ENCODE measurements at regions of chr22 and their contacts with region 1.

Region 1: GRCh38 chr22:40024201-40025061 is 29.7 kb downstream of the FAM83F start:
- DNase-seq: peak; percentile 20 to 78 (median 64)
- ATAC-seq: peak; percentile 72
- H3K4me3 ChIP-seq: no peak overlapping the region
- H3K4me3 Mint-ChIP-seq: no peak overlapping the region
- H3K27ac ChIP-seq: no peak overlapping the region
- H3K27ac Mint-ChIP-seq: no peak overlapping the region
- H3K4me1 ChIP-seq: peaks cover 6% of the 10 kb centered on the region
- H3K4me1 Mint-ChIP-seq: peaks cover 5% of the 10 kb centered on the region
- H3K27me3 ChIP-seq: no peaks in the 10 kb centered on the region
- H3K27me3 Mint-ChIP-seq: no peaks in the 10 kb centered on the region
- CTCF ChIP-seq: peak; percentile 80

Region 2: DNA sequence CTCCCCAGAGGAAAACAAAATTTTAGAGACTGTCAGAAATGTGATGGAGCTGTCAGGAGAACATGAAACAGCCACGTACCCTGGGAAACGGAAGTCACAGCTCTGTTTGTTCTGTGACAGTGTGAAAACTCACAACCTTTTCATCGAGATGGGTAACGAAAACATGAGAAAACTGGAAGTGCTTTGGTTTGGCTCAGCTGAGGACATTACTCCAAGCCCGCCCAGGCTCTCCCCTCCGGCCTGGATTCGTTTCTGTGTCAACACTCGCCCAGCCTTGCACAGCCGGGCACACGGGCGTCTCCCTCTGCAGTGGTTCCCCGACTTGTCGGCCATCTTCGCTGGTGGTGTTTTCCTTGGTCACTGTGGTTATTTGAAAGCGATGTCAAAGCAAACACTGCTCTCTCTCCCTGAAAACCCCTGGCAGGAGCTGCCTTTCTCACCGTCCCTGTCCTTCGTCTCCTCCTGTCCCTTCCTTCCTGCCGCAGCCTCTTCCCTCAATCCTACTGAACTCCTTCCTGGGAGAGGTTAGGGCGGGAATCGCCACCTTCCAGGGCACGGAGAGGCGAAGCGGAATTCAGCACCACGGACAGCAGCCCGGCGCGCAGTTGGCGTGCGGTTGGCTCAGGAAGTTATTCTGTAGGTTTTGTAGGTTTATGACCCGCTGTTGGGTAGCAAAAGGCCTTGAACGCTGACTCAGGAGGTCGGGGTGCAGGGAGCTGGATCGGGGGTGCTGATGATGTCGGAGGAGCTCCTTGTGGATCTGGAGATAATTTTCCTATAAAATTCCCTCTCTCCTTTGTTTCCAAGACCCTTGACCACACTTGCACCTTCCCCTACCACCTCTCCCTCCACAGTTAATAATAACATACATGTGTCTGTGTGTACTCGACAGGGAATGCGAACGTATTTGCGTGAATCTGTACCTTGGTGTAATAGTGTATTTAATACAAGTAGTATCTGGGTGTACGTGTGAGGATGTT is 478.8 kb before region 1 on chr22:
- CTCF ChIA-PET with region 1: interaction called, 12 read pairs
- POLR2A ChIA-PET with region 1: no interaction called
- intact Hi-C with region 1: no loop called
- DNase-seq: peak; percentile 48 to 83 (median 75)
- ATAC-seq: peak; percentile 79
- H3K4me3 ChIP-seq: peak overlapping the region in 1 of 2 experiments; percentile 22
- H3K4me3 Mint-ChIP-seq: no peak overlapping the region
- H3K27ac ChIP-seq: peak overlapping the region in 1 of 2 experiments; percentile 45
- H3K27ac Mint-ChIP-seq: no peak overlapping the region
- H3K4me1 ChIP-seq: peaks cover 13% of the 10 kb centered on the region
- H3K4me1 Mint-ChIP-seq: peaks cover 14% of the 10 kb centered on the region
- H3K27me3 ChIP-seq: peaks cover 3% of the 10 kb centered on the region in 2 experiments
- H3K27me3 Mint-ChIP-seq: peaks cover 37% of the 10 kb centered on the region
- CTCF ChIP-seq: no peak

Region 3: DNA sequence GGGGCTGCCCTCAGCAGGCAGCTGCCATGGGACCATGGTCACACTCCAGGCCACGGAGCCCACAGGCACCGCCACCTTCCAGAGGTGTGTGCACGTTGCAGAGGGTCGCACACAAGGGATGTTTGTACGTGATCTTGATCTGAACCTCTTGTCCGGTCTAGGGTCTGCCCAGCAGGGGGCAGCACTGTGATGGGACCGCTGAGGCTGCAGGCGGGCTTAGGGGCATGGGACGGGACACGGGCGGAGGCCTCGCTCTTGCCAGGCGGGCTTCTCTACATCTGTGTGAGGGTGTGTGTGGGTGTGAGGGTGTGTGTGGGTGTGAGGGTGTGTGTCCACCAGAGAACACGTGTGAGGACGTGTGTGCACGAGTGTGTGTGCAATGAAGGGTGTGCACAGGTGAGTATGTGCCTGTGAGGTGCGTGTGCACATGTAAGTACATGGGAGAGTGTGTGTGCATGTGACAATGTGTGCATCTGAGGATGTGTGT is 401.5 kb before region 1 on chr22:
- CTCF ChIA-PET with region 1: interaction called, 21 read pairs
- POLR2A ChIA-PET with region 1: no interaction called
- intact Hi-C with region 1: loop called in 1 of 2 experiments (anchors 5 kb)
- DNase-seq: peak; percentile 39 to 84 (median 67)
- ATAC-seq: peak; percentile 72
- H3K4me3 ChIP-seq: no peak overlapping the region
- H3K4me3 Mint-ChIP-seq: no peak overlapping the region
- H3K27ac ChIP-seq: no peak overlapping the region
- H3K27ac Mint-ChIP-seq: no peak overlapping the region
- H3K4me1 ChIP-seq: peaks cover 1% of the 10 kb centered on the region
- H3K4me1 Mint-ChIP-seq: peaks cover 4% of the 10 kb centered on the region
- H3K27me3 ChIP-seq: peaks cover 0 to 12% of the 10 kb centered on the region in 2 experiments
- H3K27me3 Mint-ChIP-seq: peaks cover 20% of the 10 kb centered on the region
- CTCF ChIP-seq: peak; percentile 43

Region 4: DNA sequence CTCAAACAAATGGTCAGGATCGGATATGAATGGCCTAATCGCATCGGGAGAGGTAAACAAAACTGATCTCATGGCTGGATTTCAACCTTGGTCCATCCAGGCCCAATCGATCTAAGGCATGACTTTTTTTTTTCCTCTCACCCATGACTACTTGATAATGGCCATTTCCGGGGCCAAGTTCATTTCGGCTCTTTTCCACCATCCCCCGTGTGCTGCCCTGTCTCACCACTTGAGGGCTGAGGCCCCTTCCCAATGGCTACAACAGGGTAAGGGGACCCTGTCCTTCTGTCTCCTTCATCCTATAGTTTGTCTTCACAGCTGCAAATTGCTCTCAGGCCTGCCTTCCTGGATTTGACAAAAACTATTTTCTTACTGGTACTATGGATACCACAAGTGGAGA is 96.9 kb before region 1 on chr22:
- CTCF ChIA-PET with region 1: interaction called, 12 read pairs
- POLR2A ChIA-PET with region 1: no interaction called
- intact Hi-C with region 1: no loop called
- DNase-seq: peak in 2 of 9 experiments; percentile 11 to 52
- ATAC-seq: no peak
- H3K4me3 ChIP-seq: peak overlapping the region; percentile 56 to 76
- H3K4me3 Mint-ChIP-seq: no peak overlapping the region
- H3K27ac ChIP-seq: peak overlapping the region; percentile 29 to 49
- H3K27ac Mint-ChIP-seq: no peak overlapping the region
- H3K4me1 ChIP-seq: peaks cover 82% of the 10 kb centered on the region
- H3K4me1 Mint-ChIP-seq: peaks cover 40% of the 10 kb centered on the region
- H3K27me3 ChIP-seq: no peaks in the 10 kb centered on the region
- H3K27me3 Mint-ChIP-seq: no peaks in the 10 kb centered on the region
- CTCF ChIP-seq: peak; percentile 20

Region 5: DNA sequence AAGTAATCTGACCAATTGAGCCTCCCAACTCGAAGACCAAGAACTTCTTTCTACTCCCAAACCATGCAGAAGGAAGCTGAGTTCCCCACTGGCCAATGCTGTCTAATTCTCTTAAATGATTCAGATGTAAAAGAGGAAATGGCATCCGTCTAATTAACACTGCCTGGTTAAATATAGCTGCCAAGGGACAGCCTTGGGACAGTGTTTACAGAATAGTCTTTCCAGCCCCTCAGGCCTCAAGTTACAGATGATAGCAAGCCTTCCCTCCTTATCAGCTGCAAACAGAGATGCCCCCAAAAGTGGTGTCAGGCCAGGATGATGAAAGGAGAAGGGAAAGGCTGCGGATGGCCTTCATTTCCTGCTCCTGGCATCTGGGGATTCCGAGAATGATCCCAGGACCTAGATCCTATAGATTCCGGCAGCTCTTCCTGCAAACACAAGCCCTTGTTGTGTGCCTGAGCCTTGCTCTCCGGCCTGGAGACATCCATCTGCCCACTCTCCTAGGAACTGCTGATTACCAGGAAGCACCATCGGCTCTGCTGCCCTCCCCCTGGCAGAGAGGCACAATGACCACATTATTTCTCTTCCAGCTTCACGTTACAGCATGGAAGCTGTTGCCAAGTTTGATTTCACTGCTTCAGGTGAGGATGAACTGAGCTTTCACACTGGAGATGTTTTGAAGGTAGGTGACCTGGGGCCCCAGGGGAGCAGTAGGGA is 77.8 kb before region 1 on chr22:
- CTCF ChIA-PET with region 1: interaction called, 27 read pairs
- POLR2A ChIA-PET with region 1: no interaction called
- intact Hi-C with region 1: loop called in 1 of 2 experiments (anchors 2 kb)
- DNase-seq: peak in 1 of 9 experiments; percentile 40
- ATAC-seq: no peak
- H3K4me3 ChIP-seq: no peak overlapping the region
- H3K4me3 Mint-ChIP-seq: peak overlapping the region; percentile 66
- H3K27ac ChIP-seq: peak overlapping the region; percentile 4 to 52
- H3K27ac Mint-ChIP-seq: no peak overlapping the region
- H3K4me1 ChIP-seq: peaks cover 100% of the 10 kb centered on the region
- H3K4me1 Mint-ChIP-seq: peaks cover 98% of the 10 kb centered on the region
- H3K27me3 ChIP-seq: no peaks in the 10 kb centered on the region
- H3K27me3 Mint-ChIP-seq: no peaks in the 10 kb centered on the region
- CTCF ChIP-seq: no peak

Region 6: GRCh38 chr22:40036591-40037225 is 12.3 kb after region 1 on chr22:
- CTCF ChIA-PET with region 1: interaction called, 80 read pairs
- POLR2A ChIA-PET with region 1: no interaction called
- intact Hi-C with region 1: no loop called
- DNase-seq: peak in 8 of 9 experiments; percentile 31 to 71 (median 46)
- ATAC-seq: peak; percentile 67
- H3K4me3 ChIP-seq: no peak overlapping the region
- H3K4me3 Mint-ChIP-seq: no peak overlapping the region
- H3K27ac ChIP-seq: no peak overlapping the region
- H3K27ac Mint-ChIP-seq: no peak overlapping the region
- H3K4me1 ChIP-seq: no peaks in the 10 kb centered on the region
- H3K4me1 Mint-ChIP-seq: peaks cover 10% of the 10 kb centered on the region
- H3K27me3 ChIP-seq: no peaks in the 10 kb centered on the region
- H3K27me3 Mint-ChIP-seq: peaks cover 21% of the 10 kb centered on the region
- CTCF ChIP-seq: peak; percentile 61